ENCODE measurements at regions of chr20 and their contacts with region 1.

Region 1: DNA sequence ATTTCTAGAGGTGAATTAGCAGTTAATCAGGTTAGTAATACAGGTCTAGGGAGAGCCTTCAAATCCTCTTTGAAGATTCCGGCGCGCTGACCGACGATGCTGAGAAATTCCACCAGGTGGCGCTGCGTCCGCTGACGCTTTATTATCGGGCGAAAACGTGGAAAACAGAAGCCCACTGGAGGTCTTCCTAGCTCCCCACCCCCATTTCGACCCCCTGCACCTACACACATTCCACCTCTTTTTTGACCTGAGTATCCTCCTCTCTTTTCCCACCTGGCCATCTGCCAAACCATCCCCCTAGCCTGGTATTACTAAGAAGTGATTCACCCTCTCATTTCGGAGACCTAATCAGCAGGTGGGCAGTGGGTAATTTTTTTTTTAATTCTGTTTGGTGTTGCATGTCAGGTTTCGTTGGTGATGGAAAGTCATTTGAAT is 65.4 kb upstream of the RIN2 start:
- DNase-seq: peak; percentile 31 to 84 (median 56)
- H3K4me3 ChIP-seq: no peak overlapping the region
- H3K27ac ChIP-seq: no peak overlapping the region
- H3K4me1 ChIP-seq: peaks cover 0 to 4% of the 10 kb centered on the region in 2 donors
- H3K27me3 ChIP-seq: no peaks in the 10 kb centered on the region
- CTCF ChIP-seq: peak; percentile 64 to 95 (median 86)
- POLR2A ChIP-seq: no peak

Region 2: GRCh38 chr20:19761841-19762240 is 69.1 kb after region 1 on chr20:
- intact Hi-C with region 1: loop called (anchors 10 kb)
- DNase-seq: peak in 1 of 7 donors; percentile 33
- H3K4me3 ChIP-seq: no peak overlapping the region
- H3K27ac ChIP-seq: no peak overlapping the region
- H3K4me1 ChIP-seq: peaks cover 11 to 24% of the 10 kb centered on the region in 2 donors
- H3K27me3 ChIP-seq: no peaks in the 10 kb centered on the region
- CTCF ChIP-seq: no peak
- POLR2A ChIP-seq: no peak

Region 3: DNA sequence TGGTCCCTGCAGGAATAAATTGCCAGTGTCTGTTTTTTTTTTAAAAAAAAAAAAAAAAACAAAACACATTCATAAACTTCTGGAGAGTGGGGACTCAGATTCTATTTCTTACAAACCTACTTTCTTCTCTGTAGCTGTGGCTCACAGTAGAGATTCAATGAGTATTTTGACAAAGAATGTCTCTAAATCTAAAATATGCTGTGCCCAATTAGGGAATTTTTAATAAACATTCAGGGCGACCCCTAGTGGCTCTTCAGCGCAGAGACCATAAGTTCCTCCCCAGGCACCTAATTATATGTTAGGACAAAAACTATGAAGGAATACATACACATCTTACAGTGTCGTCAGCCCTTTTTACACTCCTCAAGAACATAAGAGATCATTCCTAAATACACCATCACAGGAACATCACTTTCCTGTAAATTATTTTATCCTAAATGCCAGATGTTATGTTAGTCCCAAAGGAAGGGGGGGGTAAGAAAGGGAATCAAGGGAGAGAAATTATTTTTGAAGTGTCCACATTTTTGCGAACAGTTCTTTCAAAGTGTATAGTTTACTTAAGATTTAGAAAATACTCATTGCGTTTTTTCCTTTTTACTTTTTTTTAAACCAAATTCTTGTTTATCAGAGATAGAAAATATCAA is 302.6 kb after region 1 on chr20:
- intact Hi-C with region 1: loop called in 1 of 2 experiments (anchors 10 kb)
- DNase-seq: peak in 3 of 7 donors; percentile 46 to 61 (median 59)
- H3K4me3 ChIP-seq: no peak overlapping the region
- H3K27ac ChIP-seq: no peak overlapping the region
- H3K4me1 ChIP-seq: peaks cover 33 to 72% of the 10 kb centered on the region in 2 donors
- H3K27me3 ChIP-seq: no peaks in the 10 kb centered on the region
- CTCF ChIP-seq: peak; percentile 73 to 85 (median 83)
- POLR2A ChIP-seq: no peak

Region 4: DNA sequence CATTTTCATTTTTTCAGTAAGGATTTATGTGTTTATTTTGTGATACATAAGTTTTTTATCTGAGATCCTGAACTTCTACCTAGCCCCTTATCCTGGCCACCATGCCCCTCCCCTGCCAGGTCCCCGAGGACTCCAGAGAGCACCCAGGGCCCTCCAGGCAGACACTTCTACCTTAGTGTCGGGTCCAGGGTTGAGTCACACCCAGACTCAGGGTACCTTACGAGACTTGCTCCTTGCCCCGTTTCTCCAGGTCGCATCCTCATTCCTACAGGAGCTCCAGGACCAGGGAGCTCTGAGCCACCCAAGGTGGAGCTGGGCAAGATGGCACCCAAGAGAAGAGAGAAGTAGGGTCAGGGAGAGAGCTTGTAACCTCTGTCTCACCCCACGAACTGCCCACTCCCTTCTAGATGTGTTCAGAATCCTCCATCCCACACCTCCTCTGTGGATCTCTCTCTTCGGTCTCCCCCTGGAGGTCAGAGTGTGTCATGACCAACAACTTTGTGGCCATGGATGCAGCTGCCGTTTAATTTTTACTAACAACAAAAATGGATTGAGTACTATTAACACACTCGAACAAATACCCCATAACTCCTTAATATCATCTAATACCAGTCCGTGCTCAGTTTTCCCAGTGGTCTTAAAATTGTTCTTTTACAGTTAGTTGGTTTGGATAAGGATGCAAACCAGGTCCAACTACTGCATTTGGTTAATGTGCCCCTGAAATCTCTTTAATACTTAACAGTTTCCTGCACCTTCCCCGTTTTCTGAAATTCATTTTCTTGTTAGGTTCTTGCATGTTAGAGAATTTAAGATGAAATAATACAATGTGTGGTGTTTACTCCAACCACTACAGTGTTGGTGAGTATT is 544.6 kb after region 1 on chr20:
- intact Hi-C with region 1: loop called in 1 of 2 experiments (anchors 10 kb)
- DNase-seq: peak in 6 of 7 donors; percentile 20 to 56 (median 43)
- H3K4me3 ChIP-seq: no peak overlapping the region
- H3K27ac ChIP-seq: no peak overlapping the region
- H3K4me1 ChIP-seq: peaks cover 0 to 5% of the 10 kb centered on the region in 2 donors
- H3K27me3 ChIP-seq: no peaks in the 10 kb centered on the region
- CTCF ChIP-seq: peak; percentile 49 to 70 (median 67)
- POLR2A ChIP-seq: no peak